GM18951 (cell line): ENCODE measurements at regions of chr11 and their contacts with region 1.

Region 1: DNA sequence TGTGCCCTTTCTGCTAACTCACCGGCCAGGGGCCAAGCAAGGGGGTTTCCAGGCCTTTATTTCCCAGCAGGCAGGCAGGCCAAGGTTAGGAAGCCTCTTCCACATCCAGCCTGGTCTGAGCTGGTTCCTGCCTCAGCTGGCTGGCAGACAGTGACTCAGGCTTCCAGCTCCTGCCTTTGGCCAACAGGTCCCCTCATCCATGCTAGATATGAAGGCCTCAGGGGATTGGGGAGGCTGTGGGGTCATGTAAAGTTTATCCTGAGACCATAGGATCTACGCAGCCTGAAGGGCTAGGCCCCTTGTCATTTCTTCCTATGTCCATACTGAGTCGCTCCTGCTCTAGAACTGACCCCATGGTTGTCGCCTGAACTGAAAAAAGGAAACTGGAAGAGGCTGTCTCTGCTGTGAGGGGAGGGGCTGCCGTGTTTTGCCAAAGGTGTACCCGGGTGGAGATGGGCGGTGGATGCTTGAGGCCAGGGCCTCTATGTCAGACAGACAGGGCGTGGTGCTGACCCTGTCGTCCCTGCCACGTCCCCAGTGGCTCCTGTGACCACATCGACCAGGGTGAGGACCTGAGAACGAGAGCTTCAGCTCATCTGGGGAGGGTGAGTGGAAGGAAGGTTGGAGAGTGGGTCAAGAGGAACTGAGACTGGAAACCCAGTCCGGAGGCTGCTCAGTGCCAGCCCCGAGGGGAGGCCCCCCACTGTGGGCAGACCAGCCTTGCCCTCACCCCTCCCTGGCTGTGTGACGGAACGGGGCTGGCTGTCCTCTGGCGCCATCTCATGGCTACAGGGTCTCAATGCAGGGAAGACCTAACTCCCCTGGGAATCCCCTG is 17.0 kb downstream of the P2RY6 start:
- POLR2A ChIP-seq: peak; percentile 26

Region 2: GRCh38 chr11:73184953-73185671 is 104.0 kb before region 1 on chr11:
- in situ Hi-C with region 1: loop called (anchors 5 kb)
- POLR2A ChIP-seq: no peak

Region 3: GRCh38 chr11:73325036-73325981 is 36.2 kb after region 1 on chr11:
- in situ Hi-C with region 1: loop called (anchors 5 kb)
- POLR2A ChIP-seq: peak; percentile 54

Region 4: GRCh38 chr11:73729594-73730206 is 440.6 kb after region 1 on chr11:
- in situ Hi-C with region 1: no loop called
- POLR2A ChIP-seq: no peak